GM12878 (cell line): ENCODE measurements at regions of chr3 and their contacts with region 1.

Region 1: DNA sequence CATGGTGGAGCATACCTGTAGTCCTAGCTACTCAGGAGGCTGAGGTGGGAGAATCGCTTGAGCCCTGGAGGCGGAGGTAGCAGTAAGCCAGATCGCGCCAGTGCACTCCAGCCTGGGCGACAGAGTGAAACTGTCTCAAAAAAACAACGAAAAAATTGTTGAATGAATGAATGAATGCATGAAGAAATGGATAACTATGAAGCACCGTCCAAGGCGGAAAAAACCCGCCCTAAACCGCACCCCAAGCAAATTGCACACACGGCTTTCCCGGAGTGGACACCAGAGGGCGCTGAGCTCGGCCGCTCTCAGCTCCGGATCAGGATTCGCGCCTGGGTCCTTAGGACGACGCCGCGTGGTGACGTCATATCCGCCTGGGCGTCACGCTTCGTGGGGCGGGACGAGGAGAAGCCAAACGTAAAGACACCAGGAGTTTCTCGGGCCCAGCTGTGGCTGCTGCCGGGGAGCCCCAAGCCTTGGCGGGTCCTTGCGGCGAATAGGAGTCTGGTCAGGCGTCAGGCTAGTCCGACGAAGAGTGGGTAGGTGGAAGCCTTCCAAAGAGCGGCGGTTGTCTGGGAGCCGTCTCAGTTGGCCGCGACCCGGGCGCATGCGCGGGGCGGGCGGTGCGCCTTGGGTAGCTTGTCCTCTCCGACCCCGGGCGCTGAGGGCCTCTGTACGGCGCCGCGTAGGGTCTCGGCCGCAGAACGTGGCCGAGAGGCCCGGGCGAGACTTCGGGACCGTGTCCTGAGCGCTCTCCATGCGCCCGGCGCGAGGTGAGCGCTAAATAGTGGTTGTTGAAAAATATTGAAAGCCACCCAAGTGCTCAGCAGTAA is at the starts of genes HTD2 and RPP14:
- DNase-seq: peak; percentile 90
- ATAC-seq: peak; percentile 94
- H3K4me3 ChIP-seq: peak within 1 kb of the TSS; percentile 74
- H3K27ac ChIP-seq: peak within 1 kb of the TSS; percentile 94
- H3K4me1 ChIP-seq: 0 out of 2 replicates have a peak, but pooled peaks cover 2% of the 10 kb centered on the region
- H3K27me3 ChIP-seq: no peaks in the 10 kb centered on the region
- CTCF ChIP-seq: peak; percentile 93 to 98 (median 96); a peak in 5 of 6 replicates
- EP300 ChIP-seq: peak in 1 of 2 experiments; percentile 43; a peak in 1 of 4 replicates
- POLR2A ChIP-seq: peak; percentile 84
- RAD21 ChIP-seq: peak; percentile 45; the same call in 1 of the 2 replicates
- polyA plus RNA-seq, gene HTD2: 13.5 to 15.9 TPM
- polyA plus RNA-seq, gene RPP14: 9.1 to 16.3 TPM

Region 2: DNA sequence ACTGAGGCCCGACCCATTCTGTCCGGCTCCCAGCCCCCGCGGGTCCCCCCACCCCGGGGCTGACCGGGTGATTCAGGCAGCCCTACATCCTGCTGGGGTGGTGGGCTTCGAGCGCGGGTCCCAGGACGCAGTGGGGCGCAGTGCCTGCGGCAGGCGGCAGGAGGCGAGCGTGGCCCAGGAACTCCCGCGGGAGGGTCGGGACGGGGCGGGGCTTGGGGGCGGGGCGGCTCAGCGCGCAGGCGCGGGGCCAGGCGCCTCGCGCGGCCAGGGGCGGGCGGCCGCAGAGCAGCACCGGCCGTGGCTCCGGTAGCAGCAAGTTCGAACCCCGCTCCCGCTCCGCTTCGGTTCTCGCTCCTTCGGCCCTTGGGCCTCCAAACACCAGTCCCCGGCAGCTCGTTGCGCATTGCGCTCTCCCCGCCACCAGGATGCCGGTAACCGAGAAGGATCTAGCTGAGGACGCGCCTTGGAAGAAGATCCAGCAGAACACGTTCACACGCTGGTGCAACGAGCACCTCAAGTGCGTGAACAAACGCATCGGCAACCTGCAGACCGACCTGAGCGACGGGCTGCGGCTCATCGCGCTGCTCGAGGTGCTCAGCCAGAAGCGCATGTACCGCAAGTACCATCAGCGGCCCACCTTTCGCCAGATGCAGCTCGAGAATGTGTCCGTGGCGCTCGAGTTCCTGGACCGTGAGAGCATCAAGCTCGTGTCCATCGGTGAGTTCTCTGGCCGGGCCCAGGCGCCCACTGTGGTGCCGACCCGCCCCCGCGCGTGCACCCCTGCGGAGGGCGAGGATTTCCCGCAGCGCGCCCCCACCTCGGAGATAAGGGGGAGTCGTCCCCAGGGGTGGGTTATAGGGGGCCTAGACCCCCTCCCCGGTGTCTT is 297.7 kb before region 1 on chr3 and contains the start of gene FLNB:
- CTCF ChIA-PET with region 1: interaction called, 10 read pairs
- POLR2A ChIA-PET with region 1: interaction called, 3 read pairs
- RAD21 ChIA-PET with region 1: interaction called, 6 read pairs
- SMC1A ChIA-PET with region 1: no interaction called
- in situ Hi-C with region 1: no loop called
- intact Hi-C with region 1: loop called (anchors 10 kb)
- DNase-seq: no peak
- ATAC-seq: peak; percentile 81
- H3K4me3 ChIP-seq: peak within 1 kb of the TSS; percentile 77
- H3K27ac ChIP-seq: peak within 1 kb of the TSS; percentile 45
- H3K4me1 ChIP-seq: peaks cover 16% of the 10 kb centered on the region
- H3K27me3 ChIP-seq: no peaks in the 10 kb centered on the region
- CTCF ChIP-seq: peak; percentile 72 to 95 (median 90)
- EP300 ChIP-seq: no peak
- POLR2A ChIP-seq: peak; percentile 90
- RAD21 ChIP-seq: peak; percentile 91
- polyA plus RNA-seq, gene FLNB: 13.6 to 15.8 TPM

Region 3: DNA sequence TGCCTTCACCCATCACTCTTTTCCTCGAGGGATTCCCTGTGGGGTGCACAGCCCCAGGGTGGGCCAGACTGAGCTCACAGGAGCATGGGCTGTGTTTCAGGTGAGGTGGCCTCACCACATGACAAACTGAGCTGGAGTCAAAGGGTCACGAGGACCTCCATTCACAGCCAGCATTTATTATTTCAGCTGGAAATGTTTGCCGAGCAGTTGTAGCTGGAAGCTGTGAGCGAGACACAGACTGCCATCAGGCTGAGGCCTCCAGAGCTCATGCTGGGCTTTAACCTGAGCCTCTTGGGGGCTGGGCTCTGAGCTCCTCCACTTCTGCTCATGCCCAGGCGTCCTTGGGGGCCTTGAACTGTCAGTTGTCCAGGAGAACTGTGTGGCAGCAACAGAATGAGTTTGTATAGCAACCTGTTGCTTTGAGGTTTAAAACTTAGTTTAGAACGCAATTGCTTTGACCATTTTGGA is 240.4 kb before region 1 on chr3:
- CTCF ChIA-PET with region 1: no interaction called
- POLR2A ChIA-PET with region 1: no interaction called
- RAD21 ChIA-PET with region 1: no interaction called
- SMC1A ChIA-PET with region 1: no interaction called
- in situ Hi-C with region 1: no loop called
- intact Hi-C with region 1: no loop called
- DNase-seq: no peak
- ATAC-seq: no peak
- H3K4me3 ChIP-seq: no peak overlapping the region
- H3K27ac ChIP-seq: no peak overlapping the region
- H3K4me1 ChIP-seq: no peaks in the 10 kb centered on the region
- H3K27me3 ChIP-seq: no peaks in the 10 kb centered on the region
- CTCF ChIP-seq: no peak
- EP300 ChIP-seq: no peak
- POLR2A ChIP-seq: no peak
- RAD21 ChIP-seq: no peak

Region 4: GRCh38 chr3:58200846-58201355 is 105.2 kb before region 1 on chr3:
- CTCF ChIA-PET with region 1: interaction called, 12 read pairs
- POLR2A ChIA-PET with region 1: interaction called, 5 read pairs
- RAD21 ChIA-PET with region 1: interaction called, 6 read pairs
- SMC1A ChIA-PET with region 1: interaction called, 5 read pairs
- in situ Hi-C with region 1: no loop called
- intact Hi-C with region 1: no loop called
- DNase-seq: no peak
- ATAC-seq: peak; percentile 53
- H3K4me3 ChIP-seq: no peak overlapping the region; the same call in 1 of the 2 replicates
- H3K27ac ChIP-seq: peak overlapping the region; percentile 73
- H3K4me1 ChIP-seq: peaks cover 46% of the 10 kb centered on the region
- H3K27me3 ChIP-seq: no peaks in the 10 kb centered on the region
- CTCF ChIP-seq: no peak
- EP300 ChIP-seq: no peak
- POLR2A ChIP-seq: 0 out of 2 replicates have a peak, but pooled peaks have one; percentile 25
- RAD21 ChIP-seq: no peak

Region 5: GRCh38 chr3:58317811-58318210 is 11.7 kb after region 1 on chr3:
- CTCF ChIA-PET with region 1: interaction called, 78 read pairs
- POLR2A ChIA-PET with region 1: interaction called, 3 read pairs
- RAD21 ChIA-PET with region 1: interaction called, 3 read pairs
- SMC1A ChIA-PET with region 1: interaction called, 21 read pairs
- in situ Hi-C with region 1: no loop called
- intact Hi-C with region 1: no loop called
- DNase-seq: no peak
- ATAC-seq: no peak
- H3K4me3 ChIP-seq: no peak overlapping the region
- H3K27ac ChIP-seq: no peak overlapping the region
- H3K4me1 ChIP-seq: no peaks in the 10 kb centered on the region
- H3K27me3 ChIP-seq: no peaks in the 10 kb centered on the region
- CTCF ChIP-seq: no peak
- EP300 ChIP-seq: no peak
- POLR2A ChIP-seq: no peak
- RAD21 ChIP-seq: no peak

Region 6: DNA sequence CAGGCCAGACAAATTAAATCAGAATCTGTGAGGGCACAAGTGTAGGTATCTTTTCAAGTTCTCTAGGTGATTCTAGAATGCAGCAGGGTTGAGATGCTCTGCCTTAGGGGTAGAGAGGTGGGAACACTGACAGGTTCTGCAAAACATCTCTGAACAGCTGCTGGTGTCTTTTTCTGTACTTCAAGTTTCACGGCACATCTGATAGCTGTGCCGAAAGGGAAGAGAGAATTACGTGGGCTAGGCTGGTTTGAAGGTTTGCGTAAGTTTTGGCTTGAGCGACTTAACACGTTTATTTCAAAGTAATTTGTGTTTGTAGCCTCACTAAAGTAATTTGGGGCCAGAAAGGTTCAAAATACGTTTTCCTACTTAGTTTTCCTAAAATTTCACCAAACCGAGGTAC is 49.1 kb after region 1 on chr3:
- CTCF ChIA-PET with region 1: interaction called, 14 read pairs
- POLR2A ChIA-PET with region 1: interaction called, 3 read pairs
- RAD21 ChIA-PET with region 1: interaction called, 15 read pairs
- SMC1A ChIA-PET with region 1: interaction called, 17 read pairs
- in situ Hi-C with region 1: no loop called
- intact Hi-C with region 1: no loop called
- DNase-seq: no peak
- ATAC-seq: peak; percentile 70
- H3K4me3 ChIP-seq: peak overlapping the region; percentile 18; the same call in 1 of the 2 replicates
- H3K27ac ChIP-seq: no peak overlapping the region
- H3K4me1 ChIP-seq: peaks cover 59% of the 10 kb centered on the region
- H3K27me3 ChIP-seq: no peaks in the 10 kb centered on the region
- CTCF ChIP-seq: no peak
- EP300 ChIP-seq: no peak
- POLR2A ChIP-seq: no peak
- RAD21 ChIP-seq: no peak

Region 7: GRCh38 chr3:58433400-58434169 is 127.5 kb after region 1 on chr3 and contains the start of gene PDHB:
- CTCF ChIA-PET with region 1: interaction called, 11 read pairs
- POLR2A ChIA-PET with region 1: interaction called, 7 read pairs
- RAD21 ChIA-PET with region 1: interaction called, 4 read pairs
- SMC1A ChIA-PET with region 1: interaction called, 8 read pairs
- in situ Hi-C with region 1: no loop called
- intact Hi-C with region 1: no loop called
- DNase-seq: peak; percentile 59
- ATAC-seq: peak; percentile 98
- H3K4me3 ChIP-seq: peak within 1 kb of the TSS; percentile 87
- H3K27ac ChIP-seq: peak within 1 kb of the TSS; percentile 81
- H3K4me1 ChIP-seq: peaks cover 14% of the 10 kb centered on the region
- H3K27me3 ChIP-seq: no peaks in the 10 kb centered on the region
- CTCF ChIP-seq: no peak
- EP300 ChIP-seq: no peak
- POLR2A ChIP-seq: peak; percentile 99
- RAD21 ChIP-seq: no peak
- polyA plus RNA-seq, gene PDHB: 167 to 224 TPM

Region 8: GRCh38 chr3:58630076-58630709 is 324.1 kb after region 1 on chr3:
- CTCF ChIA-PET with region 1: interaction called, 50 read pairs
- POLR2A ChIA-PET with region 1: no interaction called
- RAD21 ChIA-PET with region 1: interaction called, 6 read pairs
- SMC1A ChIA-PET with region 1: interaction called, 15 read pairs
- in situ Hi-C with region 1: loop called (anchors 5 kb)
- intact Hi-C with region 1: loop called (anchors 5 kb)
- DNase-seq: no peak
- ATAC-seq: peak; percentile 87
- H3K4me3 ChIP-seq: no peak overlapping the region
- H3K27ac ChIP-seq: no peak overlapping the region
- H3K4me1 ChIP-seq: no peaks in the 10 kb centered on the region
- H3K27me3 ChIP-seq: peaks cover 2 to 3% of the 10 kb centered on the region in 2 experiments; a peak in 1 of 4 replicates
- CTCF ChIP-seq: peak; percentile 87 to 89 (median 88)
- EP300 ChIP-seq: no peak
- POLR2A ChIP-seq: no peak
- RAD21 ChIP-seq: peak; percentile 83